B cell (primary cell): ENCODE measurements at regions of chr2 and their contacts with region 1.

Region 1: GRCh38 chr2:69724540-69725159 is 17.3 kb upstream of the ANXA4 start:
- DNase-seq: peak; percentile 86
- ATAC-seq: peak; percentile 74
- H3K4me3 ChIP-seq: peak overlapping the region in 4 of 5 experiments; percentile 27 to 44 (median 31)
- H3K4me3 Mint-ChIP-seq: peak overlapping the region; percentile 64
- H3K27ac ChIP-seq: no peak overlapping the region
- H3K27ac Mint-ChIP-seq: no peak overlapping the region
- H3K4me1 ChIP-seq: peaks cover 3 to 7% of the 10 kb centered on the region in 2 donors
- H3K4me1 Mint-ChIP-seq: peaks cover 7% of the 10 kb centered on the region
- H3K27me3 ChIP-seq: no peaks in the 10 kb centered on the region
- H3K27me3 Mint-ChIP-seq: peaks cover 6% of the 10 kb centered on the region
- CTCF ChIP-seq: peak; percentile 100

Region 2: GRCh38 chr2:69559442-69560146 is 165.1 kb before region 1 on chr2:
- CTCF ChIA-PET with region 1: interaction called, 11 read pairs
- POLR2A ChIA-PET with region 1: no interaction called
- intact Hi-C with region 1: no loop called
- DNase-seq: peak; percentile 51
- ATAC-seq: peak; percentile 62
- H3K4me3 ChIP-seq: no peak overlapping the region
- H3K4me3 Mint-ChIP-seq: no peak overlapping the region
- H3K27ac ChIP-seq: no peak overlapping the region
- H3K27ac Mint-ChIP-seq: no peak overlapping the region
- H3K4me1 ChIP-seq: peaks cover 0 to 4% of the 10 kb centered on the region in 2 donors
- H3K4me1 Mint-ChIP-seq: peaks cover 4% of the 10 kb centered on the region
- H3K27me3 ChIP-seq: peaks cover 0 to 5% (median 0%) of the 10 kb centered on the region in 4 experiments
- H3K27me3 Mint-ChIP-seq: peaks cover 21% of the 10 kb centered on the region
- CTCF ChIP-seq: peak; percentile 55

Region 3: GRCh38 chr2:69741619-69742466 is 17.2 kb after region 1 on chr2 and contains the start of gene ANXA4:
- CTCF ChIA-PET with region 1: interaction called, 59 read pairs
- POLR2A ChIA-PET with region 1: no interaction called
- intact Hi-C with region 1: no loop called
- DNase-seq: peak; percentile 68
- ATAC-seq: peak; percentile 82
- H3K4me3 ChIP-seq: peak within 1 kb of the TSS; percentile 74 to 89 (median 75)
- H3K4me3 Mint-ChIP-seq: peak within 1 kb of the TSS; percentile 99
- H3K27ac ChIP-seq: peak within 1 kb of the TSS; percentile 14 to 79
- H3K27ac Mint-ChIP-seq: peak within 1 kb of the TSS; percentile 95
- H3K4me1 ChIP-seq: peaks cover 26 to 41% of the 10 kb centered on the region in 2 donors
- H3K4me1 Mint-ChIP-seq: peaks cover 30% of the 10 kb centered on the region
- H3K27me3 ChIP-seq: no peaks in the 10 kb centered on the region
- H3K27me3 Mint-ChIP-seq: no peaks in the 10 kb centered on the region
- CTCF ChIP-seq: no peak
- total RNA-seq, gene ANXA4: 28.1 and 28.4 TPM in 2 replicates

Region 4: GRCh38 chr2:69762513-69763497 is 38.2 kb after region 1 on chr2:
- CTCF ChIA-PET with region 1: interaction called, 13 read pairs
- POLR2A ChIA-PET with region 1: no interaction called
- intact Hi-C with region 1: no loop called
- DNase-seq: peak; percentile 38
- ATAC-seq: no peak
- H3K4me3 ChIP-seq: no peak overlapping the region
- H3K4me3 Mint-ChIP-seq: no peak overlapping the region
- H3K27ac ChIP-seq: peak overlapping the region in 1 of 2 donors; percentile 31
- H3K27ac Mint-ChIP-seq: peak overlapping the region; percentile 17
- H3K4me1 ChIP-seq: peaks cover 44 to 49% of the 10 kb centered on the region in 2 donors
- H3K4me1 Mint-ChIP-seq: peaks cover 44% of the 10 kb centered on the region
- H3K27me3 ChIP-seq: no peaks in the 10 kb centered on the region
- H3K27me3 Mint-ChIP-seq: no peaks in the 10 kb centered on the region
- CTCF ChIP-seq: no peak

Region 5: DNA sequence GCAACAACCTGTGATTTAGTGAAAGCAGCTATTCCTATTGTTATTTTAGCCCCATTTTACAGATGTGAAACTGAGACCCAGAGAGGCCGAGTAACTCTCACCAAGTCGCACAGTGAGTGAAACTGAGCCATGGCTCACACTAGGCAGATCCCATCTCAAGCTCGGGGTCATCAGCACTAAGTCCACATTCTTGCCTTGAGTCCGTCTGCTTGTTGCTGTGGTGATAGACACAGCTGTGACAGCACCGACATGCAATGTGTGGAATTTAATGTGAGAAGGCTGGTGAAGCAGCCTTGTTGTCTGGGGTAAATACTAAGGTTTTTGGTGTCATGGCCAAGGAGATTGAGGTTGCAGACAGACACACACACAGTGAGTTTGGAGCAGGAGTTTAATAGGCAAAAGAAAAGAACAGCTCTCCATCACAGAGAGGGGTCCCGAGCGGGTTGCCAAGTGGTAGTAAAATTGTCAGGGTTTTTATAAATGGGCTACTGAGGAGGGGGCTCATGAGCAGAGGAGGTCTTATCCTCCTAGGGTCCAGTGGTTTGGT is 64.6 kb after region 1 on chr2:
- CTCF ChIA-PET with region 1: interaction called, 26 read pairs
- POLR2A ChIA-PET with region 1: no interaction called
- intact Hi-C with region 1: no loop called
- DNase-seq: no peak
- ATAC-seq: no peak
- H3K4me3 ChIP-seq: peak overlapping the region in 1 of 5 experiments; percentile 50
- H3K4me3 Mint-ChIP-seq: peak overlapping the region; percentile 84
- H3K27ac ChIP-seq: peak overlapping the region; percentile 43 to 85
- H3K27ac Mint-ChIP-seq: peak overlapping the region; percentile 64
- H3K4me1 ChIP-seq: peaks cover 33 to 44% of the 10 kb centered on the region in 2 donors
- H3K4me1 Mint-ChIP-seq: peaks cover 37% of the 10 kb centered on the region
- H3K27me3 ChIP-seq: no peaks in the 10 kb centered on the region
- H3K27me3 Mint-ChIP-seq: no peaks in the 10 kb centered on the region
- CTCF ChIP-seq: no peak

Region 6: DNA sequence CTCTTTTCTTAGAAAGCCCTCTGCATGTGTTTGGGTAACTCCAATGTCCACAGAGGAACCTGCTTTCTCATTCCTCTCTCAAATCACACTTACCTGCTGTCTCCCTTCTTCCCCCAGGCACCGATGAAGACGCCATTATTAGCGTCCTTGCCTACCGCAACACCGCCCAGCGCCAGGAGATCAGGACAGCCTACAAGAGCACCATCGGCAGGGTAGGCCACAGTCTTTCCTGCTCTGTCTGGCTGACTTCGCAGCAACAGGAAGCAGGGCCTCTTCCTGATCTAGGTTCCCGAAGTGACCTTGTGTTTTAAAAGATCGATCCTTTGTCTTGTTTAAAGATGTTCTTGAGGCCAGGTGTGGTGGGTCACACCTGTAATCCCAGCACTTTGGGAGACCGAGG is 79.8 kb after region 1 on chr2:
- CTCF ChIA-PET with region 1: interaction called, 76 read pairs
- POLR2A ChIA-PET with region 1: interaction called, 3 read pairs
- intact Hi-C with region 1: no loop called
- DNase-seq: no peak
- ATAC-seq: no peak
- H3K4me3 ChIP-seq: no peak overlapping the region
- H3K4me3 Mint-ChIP-seq: peak overlapping the region; percentile 30
- H3K27ac ChIP-seq: no peak overlapping the region
- H3K27ac Mint-ChIP-seq: peak overlapping the region; percentile 17
- H3K4me1 ChIP-seq: peaks cover 44 to 53% of the 10 kb centered on the region in 2 donors
- H3K4me1 Mint-ChIP-seq: peaks cover 44% of the 10 kb centered on the region
- H3K27me3 ChIP-seq: no peaks in the 10 kb centered on the region
- H3K27me3 Mint-ChIP-seq: no peaks in the 10 kb centered on the region
- CTCF ChIP-seq: no peak

Region 7: DNA sequence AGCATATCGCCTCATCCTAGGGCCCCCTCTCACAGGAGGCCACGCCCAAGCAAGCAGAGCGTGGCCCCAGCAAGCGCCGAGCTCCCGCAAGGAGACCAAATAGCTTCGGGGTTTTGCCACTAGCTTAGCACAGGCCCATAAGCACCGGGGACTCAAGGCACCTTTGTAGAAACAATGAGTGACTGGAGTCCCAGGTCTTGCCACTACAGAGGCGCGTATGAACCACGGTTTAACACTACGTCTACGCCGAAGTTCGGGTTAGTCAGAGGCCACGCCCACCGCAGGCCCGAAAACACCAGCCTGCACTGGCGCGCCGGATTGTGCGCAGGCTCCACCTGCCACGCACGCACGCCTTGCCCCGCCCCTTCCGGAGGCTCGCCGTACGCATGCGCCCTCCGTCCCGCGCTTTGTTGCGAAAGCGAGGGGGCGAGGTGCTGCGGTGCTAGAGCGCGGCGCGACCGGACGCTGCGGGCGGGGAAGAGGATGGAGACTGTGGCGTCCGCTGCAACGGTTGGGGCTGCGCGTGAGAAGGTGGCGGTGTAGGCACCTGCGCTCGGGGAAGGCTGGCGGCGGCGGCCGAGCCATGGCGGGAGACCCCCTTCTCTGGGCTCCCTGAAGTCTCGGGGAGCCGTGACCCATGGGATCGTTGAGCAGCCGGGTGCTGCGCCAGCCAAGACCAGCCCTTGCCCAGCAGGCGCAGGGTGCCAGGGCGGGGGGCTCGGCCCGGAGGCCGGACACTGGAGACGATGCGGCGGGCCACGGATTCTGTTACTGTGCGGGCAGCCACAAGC is 104.8 kb after region 1 on chr2 and contains the start of gene GMCL1:
- CTCF ChIA-PET with region 1: interaction called, 13 read pairs
- POLR2A ChIA-PET with region 1: no interaction called
- intact Hi-C with region 1: no loop called
- DNase-seq: peak; percentile 99
- ATAC-seq: peak; percentile 96
- H3K4me3 ChIP-seq: peak within 1 kb of the TSS; percentile 46 to 97 (median 72)
- H3K4me3 Mint-ChIP-seq: peak within 1 kb of the TSS; percentile 99
- H3K27ac ChIP-seq: peak within 1 kb of the TSS; percentile 94 to 98
- H3K27ac Mint-ChIP-seq: peak within 1 kb of the TSS; percentile 99
- H3K4me1 ChIP-seq: peaks cover 24 to 26% of the 10 kb centered on the region in 2 donors
- H3K4me1 Mint-ChIP-seq: peaks cover 38% of the 10 kb centered on the region
- H3K27me3 ChIP-seq: no peaks in the 10 kb centered on the region
- H3K27me3 Mint-ChIP-seq: no peaks in the 10 kb centered on the region
- CTCF ChIP-seq: no peak
- total RNA-seq, gene GMCL1: 22.0 and 26.3 TPM in 2 replicates